PC-9 (cell line): ENCODE measurements at regions of chr9 and their contacts with region 1.

Region 1: DNA sequence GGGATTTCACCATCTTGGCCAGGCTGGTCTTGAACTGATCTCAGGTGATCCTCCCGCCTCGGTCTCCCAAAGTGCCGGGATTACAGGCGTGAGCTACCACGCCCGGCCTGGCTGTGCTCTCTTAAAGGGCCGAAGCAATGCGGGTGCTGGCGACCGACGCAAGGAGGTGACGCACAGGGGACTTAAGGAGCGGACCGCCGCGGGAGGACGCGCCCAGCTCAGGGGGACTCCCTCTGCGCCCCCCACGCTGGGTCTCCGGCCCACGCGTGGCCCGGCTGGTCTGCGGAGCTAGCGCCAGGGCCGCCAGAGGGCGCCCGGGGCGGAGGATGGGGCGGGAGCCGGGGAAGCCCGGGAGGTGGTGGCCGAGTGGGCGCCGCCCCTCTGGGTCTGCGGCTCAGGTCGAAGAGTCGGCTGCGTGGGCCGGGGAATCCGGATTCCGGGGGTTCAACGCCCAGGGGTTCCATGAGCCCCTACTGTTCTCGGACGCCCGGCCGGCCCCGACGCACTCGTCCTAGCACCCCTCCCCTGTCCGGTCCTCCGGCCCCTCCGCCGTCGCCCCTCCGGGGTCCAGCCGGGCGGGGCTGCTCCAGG is 502 bp upstream of the CERCAM start:
- DNase-seq: peak; percentile 47 to 82
- H3K4me3 ChIP-seq: peak overlapping the region; percentile 95
- H3K27ac ChIP-seq: no peak overlapping the region
- H3K4me1 ChIP-seq: peaks cover 26% of the 10 kb centered on the region
- H3K27me3 ChIP-seq: no peaks in the 10 kb centered on the region
- CTCF ChIP-seq: peak; percentile 85

Region 2: DNA sequence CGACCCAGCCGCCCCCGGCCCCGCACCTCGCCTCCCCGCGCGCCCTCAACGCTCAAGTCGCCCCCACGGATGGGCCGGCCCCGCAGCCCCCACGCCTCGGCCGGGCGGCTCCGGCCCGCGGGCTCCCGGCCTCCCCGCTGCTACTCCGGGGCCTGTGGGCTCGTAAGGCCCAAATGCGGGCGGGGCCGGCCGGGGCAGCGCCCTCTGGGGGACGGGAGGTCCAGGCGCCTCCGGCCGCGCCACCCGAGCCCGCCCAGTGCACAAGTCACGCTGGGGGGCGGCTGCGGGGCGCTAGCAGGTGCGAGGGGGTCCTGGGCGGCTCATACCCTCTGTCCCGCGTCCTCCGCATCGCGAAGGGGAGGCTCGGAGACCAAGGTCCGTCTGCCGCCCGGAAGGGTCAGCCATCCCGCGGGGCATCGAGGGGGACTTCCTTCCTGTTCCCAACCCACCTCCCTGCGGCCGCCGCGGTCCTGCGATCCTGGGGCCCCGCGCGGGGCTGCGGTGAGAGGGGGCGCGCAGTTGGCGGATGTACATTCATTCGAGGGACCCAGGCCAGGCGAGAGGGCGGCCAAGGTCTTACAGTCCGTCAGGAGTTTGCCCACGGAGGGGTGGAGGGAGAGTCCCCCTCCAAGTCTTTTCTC is 228.6 kb before region 1 on chr9 and contains the start of gene CIZ1:
- CTCF ChIA-PET with region 1: interaction called, 11 read pairs
- POLR2A ChIA-PET with region 1: no interaction called
- intact Hi-C with region 1: no loop called
- DNase-seq: peak; percentile 46 to 83
- H3K4me3 ChIP-seq: peak within 1 kb of the TSS; percentile 83
- H3K27ac ChIP-seq: peak within 1 kb of the TSS; percentile 77
- H3K4me1 ChIP-seq: peaks cover 16% of the 10 kb centered on the region
- H3K27me3 ChIP-seq: no peaks in the 10 kb centered on the region
- CTCF ChIP-seq: peak; percentile 65
- total RNA-seq, gene CIZ1: 164 and 213 TPM in 2 replicates

Region 3: DNA sequence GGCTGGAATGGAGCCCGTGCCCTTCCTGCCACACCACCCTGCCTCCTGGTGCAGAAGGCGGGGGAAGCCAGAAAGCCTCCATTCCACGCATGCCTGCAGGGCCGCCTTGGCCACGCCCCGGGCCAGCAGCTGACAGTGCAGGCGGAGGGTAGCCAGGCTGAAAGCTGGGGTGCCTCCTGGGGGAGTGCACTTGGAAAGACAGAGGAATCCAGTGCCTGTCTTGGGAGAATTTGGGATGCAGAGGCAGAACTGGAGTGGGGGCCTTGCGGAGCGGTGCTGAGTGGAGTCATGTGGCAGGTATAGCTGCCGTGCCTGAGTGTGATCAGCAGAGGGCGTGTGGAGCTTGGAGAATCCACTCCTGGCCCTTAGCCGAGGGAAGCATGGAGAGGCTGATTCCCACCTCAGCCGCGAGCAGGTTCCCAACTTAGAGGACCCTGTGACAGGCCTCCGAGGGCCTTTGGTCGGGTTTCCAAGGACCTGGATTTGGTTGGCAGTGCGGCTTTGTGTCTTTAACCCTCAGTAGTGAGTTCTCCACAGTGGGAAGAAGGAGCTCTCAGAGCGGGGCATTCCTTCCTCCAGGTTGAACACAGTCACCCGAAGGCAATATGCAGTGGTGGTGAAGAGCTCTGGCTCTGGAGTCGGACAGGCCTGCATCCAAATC is 58.0 kb before region 1 on chr9:
- CTCF ChIA-PET with region 1: interaction called, 5 read pairs
- POLR2A ChIA-PET with region 1: interaction called, 16 read pairs
- intact Hi-C with region 1: loop called (anchors 2 kb)
- DNase-seq: peak in 1 of 2 experiments; percentile 87
- H3K4me3 ChIP-seq: peak overlapping the region; percentile 53; the same call in 1 of the 2 replicates
- H3K27ac ChIP-seq: no peak overlapping the region
- H3K4me1 ChIP-seq: peaks cover 12% of the 10 kb centered on the region
- H3K27me3 ChIP-seq: no peaks in the 10 kb centered on the region
- CTCF ChIP-seq: peak; percentile 88

Region 4: DNA sequence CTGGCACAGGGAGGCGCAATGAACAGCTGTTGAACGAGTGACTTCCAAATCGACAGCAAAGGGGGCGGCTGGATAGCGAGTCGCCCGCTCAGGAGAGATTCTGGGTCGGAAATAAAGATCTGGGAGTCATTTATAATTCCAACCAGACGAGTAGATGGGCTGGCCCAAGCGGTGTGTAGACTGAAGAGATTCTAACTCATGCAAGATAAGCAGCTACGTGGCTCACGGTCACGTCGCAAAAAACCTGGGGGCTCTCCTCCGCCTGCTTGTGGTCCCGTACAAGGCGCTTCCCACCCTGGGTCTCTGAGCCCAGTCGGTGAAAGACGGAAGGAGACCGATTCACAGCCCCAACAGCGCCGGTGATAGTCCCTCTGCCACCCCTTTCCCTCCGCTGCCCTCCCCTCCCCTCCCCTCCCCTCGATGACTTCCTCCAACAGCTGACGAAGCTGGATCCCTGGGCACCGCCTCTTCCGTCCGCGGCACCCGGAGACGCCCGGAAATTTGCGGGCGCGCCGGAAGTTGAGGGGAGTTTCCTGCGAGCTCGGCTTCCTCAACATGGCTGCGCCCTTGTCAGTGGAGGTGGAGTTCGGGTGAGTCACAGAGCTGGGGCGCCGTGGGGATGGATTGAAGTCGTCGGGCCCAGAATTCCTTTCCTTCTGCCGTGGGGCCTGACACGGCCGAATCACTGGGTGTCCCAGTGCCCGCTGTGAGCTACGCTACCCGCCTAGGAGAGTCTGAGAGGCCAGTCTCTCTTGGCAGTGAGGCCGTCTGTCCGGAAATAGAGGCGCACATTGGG is 49.1 kb before region 1 on chr9 and contains the start of gene URM1:
- CTCF ChIA-PET with region 1: interaction called, 5 read pairs
- POLR2A ChIA-PET with region 1: interaction called, 3 read pairs
- intact Hi-C with region 1: loop called (anchors 2 kb)
- DNase-seq: peak; percentile 97
- H3K4me3 ChIP-seq: peak within 1 kb of the TSS; percentile 66
- H3K27ac ChIP-seq: peak within 1 kb of the TSS; percentile 54
- H3K4me1 ChIP-seq: peaks cover 18% of the 10 kb centered on the region; the same call in 1 of the 2 replicates
- H3K27me3 ChIP-seq: no peaks in the 10 kb centered on the region
- CTCF ChIP-seq: no peak
- total RNA-seq, gene URM1: 98.1 and 101 TPM in 2 replicates

Region 5: DNA sequence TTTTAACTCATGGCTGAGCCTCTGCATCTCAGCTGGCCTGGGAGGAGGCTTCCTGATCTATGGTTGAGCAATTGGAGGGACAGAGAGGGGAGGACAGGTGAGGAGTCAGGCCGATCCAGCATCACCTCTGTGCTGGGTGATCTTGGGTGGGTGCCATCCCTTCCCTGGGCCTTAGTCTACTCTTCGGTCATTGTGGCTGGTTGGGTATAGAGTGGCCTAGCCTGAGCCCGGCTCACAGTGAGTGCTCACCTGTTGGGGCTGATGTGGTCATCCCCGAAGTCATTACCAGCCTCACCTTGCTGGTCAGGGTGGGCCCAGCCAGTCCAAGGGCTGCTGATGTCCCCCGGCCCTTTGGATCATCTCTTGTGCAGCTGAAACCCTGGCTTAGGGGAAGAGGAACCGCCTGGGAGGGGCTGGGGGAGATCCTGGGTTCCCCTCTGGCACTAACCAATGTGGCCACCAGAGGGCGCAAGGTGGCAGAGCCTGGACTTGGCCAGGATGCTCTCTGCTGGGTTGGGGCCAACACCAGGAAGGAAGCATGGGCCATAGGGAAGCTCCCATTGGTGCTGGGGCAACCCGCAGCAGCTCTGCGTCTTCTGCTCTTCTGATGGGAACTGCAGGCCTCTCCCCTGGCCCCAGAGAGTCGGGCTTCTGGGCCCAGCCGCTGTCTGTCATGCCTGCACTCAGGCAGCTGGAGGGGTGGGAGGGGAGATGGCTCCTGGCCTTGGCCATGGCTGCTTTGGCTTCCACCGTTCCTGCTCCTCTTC is 18.4 kb after region 1 on chr9:
- CTCF ChIA-PET with region 1: interaction called, 12 read pairs
- POLR2A ChIA-PET with region 1: interaction called, 6 read pairs
- intact Hi-C with region 1: no loop called
- DNase-seq: peak; percentile 51 to 83
- H3K4me3 ChIP-seq: no peak overlapping the region
- H3K27ac ChIP-seq: no peak overlapping the region
- H3K4me1 ChIP-seq: no peaks in the 10 kb centered on the region
- H3K27me3 ChIP-seq: no peaks in the 10 kb centered on the region
- CTCF ChIP-seq: peak; percentile 93

Region 6: DNA sequence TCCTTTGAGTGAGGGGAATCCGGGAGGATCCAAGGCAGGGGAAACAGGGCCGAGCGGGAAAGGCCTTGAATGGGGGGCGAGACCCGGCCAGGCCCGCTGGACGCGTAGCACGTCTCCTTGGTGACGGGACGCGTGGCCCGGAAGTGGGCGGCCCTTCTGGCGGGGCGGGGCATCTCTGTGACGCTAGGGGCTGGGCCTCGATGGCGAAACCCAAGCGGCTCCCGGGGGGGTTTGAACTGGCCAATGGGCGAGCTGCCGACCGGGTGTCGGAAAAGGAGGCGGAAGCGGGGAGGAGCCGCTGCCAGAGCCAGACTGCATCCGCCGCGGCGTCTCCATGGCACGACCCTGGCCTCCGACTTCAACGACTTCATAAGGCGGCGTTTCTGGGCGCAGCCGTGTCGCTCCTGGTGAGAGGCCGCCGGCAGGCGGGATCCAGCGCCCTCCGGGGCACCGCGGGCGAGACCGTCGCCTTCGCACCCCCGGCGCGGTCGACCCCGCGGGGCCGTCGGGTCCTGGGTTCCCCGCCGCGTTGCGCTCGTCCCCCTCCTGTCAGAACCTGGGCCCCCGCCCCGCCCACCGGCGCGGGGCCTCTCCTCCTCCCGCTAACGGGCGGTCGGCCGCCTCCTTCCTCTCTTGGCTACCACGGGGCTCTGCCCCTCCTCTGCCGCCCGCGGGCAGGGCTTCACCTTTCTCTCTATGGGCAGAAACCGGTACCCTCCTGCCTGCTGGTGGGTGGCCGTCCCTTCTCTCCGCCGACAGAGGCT is 35.9 kb after region 1 on chr9 and contains the start of gene ODF2:
- CTCF ChIA-PET with region 1: interaction called, 3 read pairs
- POLR2A ChIA-PET with region 1: no interaction called
- intact Hi-C with region 1: loop called (anchors 2 kb)
- DNase-seq: peak; percentile 83 to 99
- H3K4me3 ChIP-seq: peak within 1 kb of the TSS; percentile 90
- H3K27ac ChIP-seq: no peak within 1 kb of the TSS
- H3K4me1 ChIP-seq: 0 out of 2 replicates have a peak, but pooled peaks cover 6% of the 10 kb centered on the region
- H3K27me3 ChIP-seq: no peaks in the 10 kb centered on the region
- CTCF ChIP-seq: no peak
- total RNA-seq, gene ODF2: 49.4 and 58.2 TPM in 2 replicates

Region 7: DNA sequence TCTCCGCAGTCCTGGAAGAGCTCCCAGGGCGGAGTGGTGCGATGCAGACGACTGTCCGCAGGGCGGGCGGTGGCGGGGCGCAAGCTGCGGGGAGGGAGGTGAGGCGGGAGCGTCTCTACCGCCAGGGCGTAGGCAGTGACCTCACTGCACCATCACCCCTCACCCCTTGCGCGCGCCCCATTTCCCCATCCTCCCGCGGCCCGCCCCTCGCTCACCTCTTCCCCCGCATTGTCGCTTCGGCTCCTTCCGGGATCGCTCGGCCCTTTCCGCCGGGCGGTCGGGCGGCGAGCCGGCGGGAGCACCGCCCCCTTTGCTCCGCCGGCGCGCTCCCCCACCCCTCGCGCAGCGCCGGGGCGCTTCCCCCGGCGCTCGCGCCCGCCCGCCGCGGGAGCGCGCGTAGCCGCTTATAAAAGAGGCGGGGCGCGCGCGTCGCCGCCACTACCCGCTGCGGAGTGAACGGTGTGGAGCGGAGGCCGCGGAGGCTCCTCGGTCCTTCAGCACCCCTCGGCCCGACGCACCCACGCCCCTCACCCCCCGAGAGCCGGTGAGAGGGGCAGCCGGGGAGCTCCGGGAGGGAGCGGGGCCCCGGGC is 132.1 kb after region 1 on chr9 and contains the start of gene SPTAN1:
- CTCF ChIA-PET with region 1: no interaction called
- POLR2A ChIA-PET with region 1: interaction called, 10 read pairs
- intact Hi-C with region 1: no loop called
- DNase-seq: peak; percentile 56 to 91
- H3K4me3 ChIP-seq: peak within 1 kb of the TSS; percentile 75
- H3K27ac ChIP-seq: peak within 1 kb of the TSS; percentile 32; the same call in 1 of the 2 replicates
- H3K4me1 ChIP-seq: peaks cover 39% of the 10 kb centered on the region
- H3K27me3 ChIP-seq: no peaks in the 10 kb centered on the region
- CTCF ChIP-seq: no peak
- total RNA-seq, gene SPTAN1: 214 and 239 TPM in 2 replicates